Sigmoid colon (tissue), 7 donors: ENCODE measurements at regions of chr2 and their contacts with region 1.

Region 1: DNA sequence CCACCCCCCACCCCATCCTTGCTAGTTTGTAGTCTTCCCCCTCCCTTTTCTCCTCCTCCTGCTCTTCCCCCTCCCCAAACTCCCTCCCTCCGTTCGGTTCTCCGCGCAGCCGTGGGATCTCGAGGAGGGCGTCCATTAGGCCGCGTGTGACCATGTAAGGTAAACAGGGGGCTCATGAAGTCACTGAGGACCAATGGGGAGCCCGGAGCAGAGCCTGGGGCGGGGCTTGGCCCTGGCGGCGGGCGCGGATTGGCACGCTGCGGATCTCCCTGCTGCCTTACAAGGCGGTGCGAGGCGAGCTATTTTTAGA is 246 bp upstream of the KLF7 start:
- DNase-seq: peak; percentile 100
- H3K4me3 ChIP-seq: peak overlapping the region; percentile 67 to 92 (median 84)
- H3K27ac ChIP-seq: peak overlapping the region; percentile 96 to 100 (median 100)
- H3K4me1 ChIP-seq: peaks cover 0 to 31% (median 25%) of the 10 kb centered on the region in 4 donors
- H3K27me3 ChIP-seq: no peaks in the 10 kb centered on the region
- CTCF ChIP-seq: no peak
- EP300 ChIP-seq: peak in 2 of 4 donors; percentile 54 to 77
- POLR2A ChIP-seq: no peak

Region 2: DNA sequence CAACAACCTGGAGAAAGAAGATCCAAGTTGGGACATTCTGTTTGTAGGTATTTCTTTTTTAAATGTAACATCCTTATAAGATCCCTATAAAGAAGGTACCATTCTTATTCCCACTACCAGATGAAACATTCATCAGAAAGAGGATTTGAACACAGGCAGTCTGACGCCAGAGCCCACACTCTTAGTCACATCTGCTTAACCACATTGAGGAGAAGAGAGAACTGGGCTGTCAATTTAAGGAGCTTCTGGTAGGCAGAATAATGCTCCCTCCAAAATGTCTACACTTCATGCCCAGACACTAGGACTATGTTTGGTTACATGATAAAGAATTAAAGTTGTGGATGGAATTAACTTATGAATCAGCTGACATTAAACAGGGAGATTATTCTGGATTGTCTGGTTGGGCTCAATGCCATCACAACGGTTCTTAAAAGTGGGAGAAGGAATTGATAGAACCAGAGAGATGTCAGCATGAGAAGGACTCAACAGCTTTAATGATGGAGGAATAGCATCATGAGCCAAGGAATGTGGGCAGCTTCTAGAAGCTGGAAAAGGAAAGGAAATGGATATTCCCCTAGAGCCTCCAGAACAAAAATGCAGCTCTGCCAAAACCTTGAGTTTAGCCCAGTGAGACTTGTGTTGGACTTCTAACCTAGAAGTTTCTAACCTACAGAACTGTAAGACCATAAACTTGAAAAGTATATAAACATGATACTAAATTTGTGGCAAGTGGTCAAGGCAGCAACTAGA is 82.5 kb before region 1 on chr2:
- intact Hi-C with region 1: loop called (anchors 5 kb)
- DNase-seq: no peak
- H3K4me3 ChIP-seq: no peak overlapping the region
- H3K27ac ChIP-seq: peak overlapping the region in 3 of 4 donors; percentile 3 to 60 (median 56)
- H3K4me1 ChIP-seq: peaks cover 0 to 31% (median 21%) of the 10 kb centered on the region in 4 donors
- H3K27me3 ChIP-seq: no peaks in the 10 kb centered on the region
- CTCF ChIP-seq: no peak
- EP300 ChIP-seq: no peak
- POLR2A ChIP-seq: no peak

Region 3: GRCh38 chr2:207115715-207116364 is 50.2 kb before region 1 on chr2:
- intact Hi-C with region 1: no loop called
- DNase-seq: peak; percentile 74
- H3K4me3 ChIP-seq: no peak overlapping the region
- H3K27ac ChIP-seq: peak overlapping the region in 3 of 4 donors; percentile 6 to 48 (median 25)
- H3K4me1 ChIP-seq: peaks cover 0 to 75% (median 31%) of the 10 kb centered on the region in 4 donors
- H3K27me3 ChIP-seq: no peaks in the 10 kb centered on the region
- CTCF ChIP-seq: peak in 1 of 4 experiments; percentile 10
- EP300 ChIP-seq: no peak
- POLR2A ChIP-seq: no peak

Region 4: DNA sequence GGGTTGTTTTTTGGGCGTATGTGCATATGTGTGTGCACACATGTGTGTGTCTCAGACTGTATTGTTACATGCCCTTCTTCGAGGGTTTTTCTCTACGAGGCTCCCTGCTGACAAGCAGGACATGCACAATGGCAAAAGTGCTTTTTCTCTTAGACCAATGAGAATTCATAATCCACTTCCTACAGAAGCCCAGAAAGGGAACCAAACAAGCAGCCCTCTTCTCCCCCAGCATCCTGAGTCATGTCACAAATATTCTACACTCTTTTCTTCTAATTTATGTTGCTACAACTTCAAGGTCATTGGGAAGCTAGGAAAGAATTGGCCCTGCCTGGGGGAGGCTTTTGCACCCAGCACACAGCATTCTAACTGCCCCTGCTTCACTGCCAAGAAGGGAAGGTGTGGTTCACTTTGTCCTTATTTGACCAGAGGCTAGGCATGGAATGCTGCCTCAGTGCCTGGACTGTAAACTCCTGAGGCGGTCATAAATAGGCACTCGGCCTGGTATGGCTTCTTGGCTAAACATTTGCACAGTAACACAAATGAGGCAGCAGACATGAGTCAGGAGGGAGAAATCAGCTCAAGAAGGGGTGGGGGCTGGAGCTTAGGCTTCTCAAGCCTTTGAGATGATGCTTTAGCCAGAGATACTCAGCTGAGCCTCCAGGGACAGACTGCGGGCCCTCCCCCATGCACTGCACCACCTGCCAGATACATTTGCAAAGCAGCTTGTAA is 92.4 kb after region 1 on chr2:
- intact Hi-C with region 1: loop called (anchors 2 kb)
- DNase-seq: peak; percentile 95
- H3K4me3 ChIP-seq: no peak overlapping the region
- H3K27ac ChIP-seq: peak overlapping the region; percentile 83 to 91 (median 84)
- H3K4me1 ChIP-seq: peaks cover 0 to 69% (median 57%) of the 10 kb centered on the region in 4 donors
- H3K27me3 ChIP-seq: no peaks in the 10 kb centered on the region
- CTCF ChIP-seq: peak in 2 of 4 experiments; percentile 14
- EP300 ChIP-seq: peak; percentile 37 to 97 (median 86)
- POLR2A ChIP-seq: no peak

Region 5: DNA sequence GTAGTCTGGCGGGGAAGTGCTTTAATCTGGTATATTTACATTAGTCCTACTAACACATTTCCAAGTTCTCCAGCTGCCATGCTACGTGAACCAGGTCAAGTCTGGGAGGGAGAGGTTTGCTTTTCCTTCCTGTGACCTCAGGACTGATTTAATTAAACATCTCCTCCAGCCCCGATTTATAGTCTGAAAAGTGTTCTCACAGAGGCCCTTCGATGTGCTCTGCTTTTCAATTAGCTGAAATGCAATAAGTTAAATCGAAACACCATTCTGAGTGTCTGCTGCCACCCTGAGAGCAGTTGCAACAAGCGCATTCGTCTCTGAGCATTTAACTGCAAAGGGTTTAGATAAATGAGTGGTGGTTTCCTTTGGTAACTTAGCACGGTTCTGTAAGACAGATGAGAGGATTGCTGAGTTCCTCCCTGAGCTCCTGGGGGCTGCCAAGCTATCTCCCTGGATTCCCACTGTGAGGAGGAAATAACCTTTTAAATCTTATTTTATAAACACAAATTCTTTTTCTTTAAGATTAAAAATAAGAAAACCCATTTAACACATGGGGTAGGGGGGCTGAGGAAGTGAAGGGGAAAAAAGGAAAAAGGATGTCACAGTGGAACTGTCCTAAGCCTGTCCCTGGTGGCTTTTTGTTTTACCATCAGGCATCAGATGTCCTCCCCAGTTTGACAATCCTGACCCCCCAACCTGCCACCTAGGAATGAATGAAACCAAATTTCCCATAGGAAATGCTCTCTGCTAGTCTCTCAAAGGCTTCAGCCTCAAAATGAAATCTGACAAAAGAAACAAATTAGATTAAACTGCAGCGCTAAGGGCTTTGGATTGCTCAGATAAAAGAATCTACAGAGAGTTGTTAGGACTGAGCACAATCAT is 307.3 kb after region 1 on chr2:
- intact Hi-C with region 1: loop called (anchors 2 kb)
- DNase-seq: no peak
- H3K4me3 ChIP-seq: peak overlapping the region in 3 of 4 donors; percentile 12 to 34 (median 25)
- H3K27ac ChIP-seq: peak overlapping the region in 3 of 4 donors; percentile 20 to 69 (median 52)
- H3K4me1 ChIP-seq: peaks cover 0 to 11% (median 8%) of the 10 kb centered on the region in 4 donors
- H3K27me3 ChIP-seq: no peaks in the 10 kb centered on the region
- CTCF ChIP-seq: peak; percentile 21 to 53 (median 42)
- EP300 ChIP-seq: peak in 1 of 4 donors; percentile 17
- POLR2A ChIP-seq: no peak